ENCODE measurements at regions of chr20 and their contacts with region 1.

Region 1: GRCh38 chr20:31951530-31952453 is at the start of gene PDRG1:
- DNase-seq: peak; percentile 92 to 99 (median 97)
- ATAC-seq: peak; percentile 100
- H3K4me3 ChIP-seq: peak within 1 kb of the TSS; percentile 90
- H3K4me3 Mint-ChIP-seq: peak within 1 kb of the TSS; percentile 90 to 100 (median 98)
- H3K27ac ChIP-seq: peak within 1 kb of the TSS; percentile 76
- H3K27ac Mint-ChIP-seq: peak within 1 kb of the TSS; percentile 88 to 99 (median 96)
- H3K4me1 ChIP-seq: peaks cover 6 to 12% of the 10 kb centered on the region in 2 donors
- H3K4me1 Mint-ChIP-seq: peaks cover 17 to 37% (median 35%) of the 10 kb centered on the region in 7 donors
- H3K27me3 ChIP-seq: no peaks in the 10 kb centered on the region
- H3K27me3 Mint-ChIP-seq: peaks cover 9 to 17% (median 13%) of the 10 kb centered on the region in 5 donors
- total RNA-seq, gene PDRG1: 7.5 to 13.6 (median 11.4) TPM

Region 2: GRCh38 chr20:31849455-31849925 is 102.3 kb before region 1 on chr20:
- CTCF ChIA-PET with region 1: interaction called, 16 read pairs
- POLR2A ChIA-PET with region 1: interaction called, 3 read pairs
- intact Hi-C with region 1: loop called (anchors 1 kb)
- DNase-seq: no peak
- ATAC-seq: no peak
- H3K4me3 ChIP-seq: no peak overlapping the region
- H3K4me3 Mint-ChIP-seq: no peak overlapping the region
- H3K27ac ChIP-seq: no peak overlapping the region
- H3K27ac Mint-ChIP-seq: no peak overlapping the region
- H3K4me1 ChIP-seq: no peaks in the 10 kb centered on the region
- H3K4me1 Mint-ChIP-seq: no peaks in the 10 kb centered on the region
- H3K27me3 ChIP-seq: no peaks in the 10 kb centered on the region
- H3K27me3 Mint-ChIP-seq: peaks cover 15 to 32% (median 18%) of the 10 kb centered on the region in 5 donors

Region 3: DNA sequence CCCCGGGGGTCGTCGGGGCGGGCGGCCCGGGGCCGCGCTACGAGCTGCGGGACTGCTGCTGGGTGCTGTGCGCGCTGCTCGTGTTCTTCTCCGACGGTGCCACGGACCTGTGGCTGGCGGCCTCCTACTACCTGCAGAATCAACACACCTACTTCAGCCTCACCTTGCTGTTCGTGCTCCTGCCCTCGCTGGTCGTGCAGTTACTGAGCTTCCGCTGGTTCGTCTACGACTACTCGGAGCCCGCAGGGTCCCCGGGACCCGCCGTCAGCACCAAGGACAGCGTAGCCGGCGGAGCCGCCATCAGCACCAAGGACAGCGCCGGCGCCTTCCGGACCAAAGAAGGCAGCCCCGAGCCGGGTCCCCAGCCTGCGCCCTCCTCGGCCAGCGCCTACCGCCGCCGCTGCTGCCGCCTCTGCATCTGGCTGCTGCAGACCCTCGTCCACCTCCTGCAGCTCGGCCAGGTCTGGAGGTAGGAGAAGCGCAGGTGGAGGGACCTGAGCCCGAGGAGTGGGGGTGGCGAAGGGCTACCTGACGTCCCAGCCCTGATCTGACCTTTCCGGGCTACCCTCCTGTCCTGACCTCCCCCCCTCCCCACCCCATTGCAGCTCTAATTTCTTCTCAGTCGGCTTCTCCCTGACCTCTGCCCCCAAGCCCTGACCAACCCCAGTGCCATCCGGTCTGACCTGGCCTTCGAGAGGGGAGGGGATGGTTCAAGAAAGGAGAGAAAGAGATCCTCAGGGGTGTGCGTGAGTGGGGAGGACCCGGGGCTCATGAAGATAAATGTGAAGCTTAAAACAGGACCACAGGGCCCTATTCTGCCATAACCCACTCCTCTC is 16.7 kb after region 1 on chr20:
- CTCF ChIA-PET with region 1: interaction called, 3 read pairs
- POLR2A ChIA-PET with region 1: no interaction called
- intact Hi-C with region 1: loop called (anchors 1 kb)
- DNase-seq: peak; percentile 74 to 93 (median 85)
- ATAC-seq: peak; percentile 98
- H3K4me3 ChIP-seq: no peak overlapping the region
- H3K4me3 Mint-ChIP-seq: peak overlapping the region; percentile 83 to 91 (median 88)
- H3K27ac ChIP-seq: no peak overlapping the region
- H3K27ac Mint-ChIP-seq: peak overlapping the region in 3 of 9 donors; percentile 46 to 75 (median 57)
- H3K4me1 ChIP-seq: no peaks in the 10 kb centered on the region
- H3K4me1 Mint-ChIP-seq: peaks cover 0 to 9% (median 9%) of the 10 kb centered on the region in 7 donors
- H3K27me3 ChIP-seq: peaks cover 4 to 5% of the 10 kb centered on the region in 2 donors
- H3K27me3 Mint-ChIP-seq: peaks cover 46 to 81% (median 60%) of the 10 kb centered on the region in 5 donors

Region 4: DNA sequence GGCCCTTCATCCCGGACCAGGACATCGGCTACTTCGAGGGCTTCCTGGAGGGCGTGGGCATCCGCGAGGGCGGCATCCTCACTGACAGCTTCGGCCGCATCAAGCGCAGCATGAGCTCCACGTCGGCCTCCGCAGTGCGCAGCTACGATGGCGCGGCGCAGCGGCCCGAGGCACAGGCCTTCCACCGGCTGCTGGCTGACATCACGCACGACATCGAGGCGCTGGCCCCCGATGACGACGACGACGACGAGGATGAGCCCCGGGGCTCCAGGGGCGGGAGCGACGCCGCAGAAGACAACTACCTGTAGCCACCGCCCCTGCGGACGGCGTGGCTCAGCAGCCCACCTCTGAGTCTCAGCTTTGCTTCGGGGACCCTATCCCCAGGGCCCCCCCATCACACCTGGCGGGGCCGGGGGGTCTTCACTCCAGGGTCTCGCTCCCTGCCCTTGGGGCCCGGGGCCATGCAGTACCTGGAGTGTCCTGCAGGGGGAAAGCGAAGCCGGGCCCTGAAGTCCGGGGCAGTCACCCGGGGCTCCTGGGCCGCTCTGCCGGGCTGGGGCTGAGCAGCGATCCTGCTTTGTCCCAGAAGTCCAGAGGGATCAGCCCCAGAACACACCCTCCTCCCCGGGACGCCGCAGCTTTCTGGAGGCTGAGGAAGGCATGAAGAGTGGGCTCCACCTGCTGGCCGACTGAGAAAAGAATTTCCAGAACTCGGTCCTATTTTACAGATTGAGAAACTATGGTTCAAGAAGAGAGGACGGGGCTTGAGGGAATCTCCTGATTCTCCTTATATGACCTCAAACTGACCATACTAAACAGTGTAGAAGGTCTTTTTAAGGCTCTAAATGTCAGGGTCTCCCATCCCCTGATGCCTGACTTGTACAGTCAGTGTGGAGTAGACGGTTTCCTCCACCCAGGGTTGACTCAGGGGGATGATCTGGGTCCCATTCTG is 79.5 kb after region 1 on chr20:
- CTCF ChIA-PET with region 1: interaction called, 4 read pairs
- POLR2A ChIA-PET with region 1: no interaction called
- intact Hi-C with region 1: loop called in 1 of 2 experiments (anchors 1 kb)
- DNase-seq: peak; percentile 22 to 67 (median 50)
- ATAC-seq: peak; percentile 68
- H3K4me3 ChIP-seq: peak overlapping the region; percentile 35
- H3K4me3 Mint-ChIP-seq: peak overlapping the region in 8 of 10 donors; percentile 29 to 66 (median 52)
- H3K27ac ChIP-seq: no peak overlapping the region
- H3K27ac Mint-ChIP-seq: no peak overlapping the region
- H3K4me1 ChIP-seq: peaks cover 0 to 4% of the 10 kb centered on the region in 2 donors
- H3K4me1 Mint-ChIP-seq: peaks cover 0 to 4% (median 0%) of the 10 kb centered on the region in 7 donors
- H3K27me3 ChIP-seq: no peaks in the 10 kb centered on the region
- H3K27me3 Mint-ChIP-seq: peaks cover 16 to 62% (median 29%) of the 10 kb centered on the region in 5 donors

Measured in naive thymus-derived CD4-positive, alpha-beta T cell (primary cell).